ENCODE measurements at regions of chr5 and their contacts with region 1.

Region 1: DNA sequence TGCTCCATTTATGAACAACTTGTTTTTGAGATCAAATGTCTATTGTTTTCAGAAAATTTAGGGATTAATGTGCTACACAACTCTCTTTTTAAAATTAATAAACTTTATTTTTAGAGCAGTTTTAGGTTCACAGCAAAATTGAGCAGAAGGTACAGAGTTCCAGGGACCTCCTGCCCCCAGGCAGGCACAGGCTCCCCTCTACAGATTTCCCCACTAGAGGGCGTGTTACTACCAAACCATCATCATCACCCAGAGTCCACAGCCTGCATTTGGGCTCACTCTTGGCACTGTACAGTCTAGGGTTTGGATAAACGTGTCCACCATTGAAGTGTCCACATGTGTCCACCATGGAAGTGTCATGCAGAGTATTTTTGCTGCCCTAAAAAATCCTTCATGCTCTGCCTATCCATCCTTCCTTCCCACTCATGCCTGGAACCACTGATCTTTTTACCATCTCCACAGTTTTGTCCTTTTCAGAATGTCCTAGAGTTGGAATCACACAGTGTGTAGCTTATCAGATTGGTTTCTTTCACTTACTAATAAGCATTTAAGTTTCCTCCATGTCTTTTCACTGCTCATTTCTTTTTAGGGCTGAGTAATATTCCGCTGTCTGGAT is 61.7 kb downstream of the MRPL36 start:
- DNase-seq: no peak
- ATAC-seq: peak in 1 of 4 donors; percentile 51
- H3K4me3 ChIP-seq: no peak overlapping the region
- H3K27ac ChIP-seq: no peak overlapping the region
- H3K4me1 ChIP-seq: no peaks in the 10 kb centered on the region
- H3K27me3 ChIP-seq: no peaks in the 10 kb centered on the region
- CTCF ChIP-seq: peak in 2 of 4 donors; percentile 28 to 31

Region 2: DNA sequence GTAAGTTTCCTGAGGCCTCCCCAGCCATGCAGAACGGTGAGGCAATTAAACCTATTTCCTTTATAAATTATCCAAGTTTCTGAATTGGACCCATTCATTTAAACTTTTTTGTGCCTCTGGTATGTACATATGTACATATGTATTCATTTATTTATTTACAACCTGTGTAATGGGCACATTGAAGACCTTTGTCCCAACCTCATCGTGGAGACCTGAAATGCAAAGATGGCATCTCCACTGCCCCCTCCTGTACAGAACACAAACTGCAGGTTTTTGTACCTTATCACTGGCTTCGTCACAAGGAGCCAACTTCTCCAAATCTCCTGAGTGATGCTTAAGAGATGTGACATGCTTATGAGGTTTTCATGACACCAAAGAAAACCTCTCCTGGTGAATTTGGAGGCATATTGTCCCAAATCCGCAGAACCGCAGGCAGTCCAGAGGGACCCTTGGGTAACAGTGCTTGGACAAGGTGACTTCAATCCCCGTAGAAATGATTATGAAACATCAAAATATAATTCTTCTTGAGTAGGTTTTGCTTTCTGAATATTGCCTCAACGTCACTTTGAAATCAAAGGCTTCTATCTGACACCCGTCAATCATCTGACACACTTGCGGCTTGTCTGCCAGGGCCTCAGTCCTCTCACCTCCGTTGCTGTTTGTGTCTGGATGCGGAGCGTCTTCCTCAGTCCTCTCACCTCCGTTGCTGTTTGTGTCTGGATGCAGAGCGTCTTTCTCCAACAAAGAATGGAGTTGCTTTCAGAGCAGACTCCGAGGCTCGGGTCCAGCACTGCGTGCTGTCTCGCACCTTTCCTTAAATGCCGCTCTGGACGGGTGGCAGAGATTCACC is 279.9 kb after region 1 on chr5:
- intact Hi-C with region 1: loop called in 1 of 3 experiments (anchors 10 kb)
- DNase-seq: no peak
- ATAC-seq: peak in 1 of 4 donors; percentile 64
- H3K4me3 ChIP-seq: no peak overlapping the region
- H3K27ac ChIP-seq: no peak overlapping the region
- H3K4me1 ChIP-seq: no peaks in the 10 kb centered on the region
- H3K27me3 ChIP-seq: peaks cover 0 to 7% (median 0%) of the 10 kb centered on the region in 4 donors
- CTCF ChIP-seq: peak in 1 of 4 donors; percentile 17